ENCODE measurements at regions of chr17 and their contacts with region 1.

Region 1: GRCh38 chr17:48441231-48441711 is 11.3 kb upstream of the SKAP1 start:
- DNase-seq: peak; percentile 61
- H3K4me3 Mint-ChIP-seq: peak overlapping the region; percentile 54
- H3K27ac Mint-ChIP-seq: peak overlapping the region; percentile 97
- H3K4me1 Mint-ChIP-seq: peaks cover 93% of the 10 kb centered on the region
- H3K27me3 Mint-ChIP-seq: no peaks in the 10 kb centered on the region

Region 2: GRCh38 chr17:48335858-48336500 is 105.3 kb before region 1 on chr17:
- CTCF ChIA-PET with region 1: no interaction called
- POLR2A ChIA-PET with region 1: no interaction called
- DNase-seq: no peak
- H3K4me3 Mint-ChIP-seq: no peak overlapping the region
- H3K27ac Mint-ChIP-seq: no peak overlapping the region
- H3K4me1 Mint-ChIP-seq: peaks cover 8% of the 10 kb centered on the region
- H3K27me3 Mint-ChIP-seq: no peaks in the 10 kb centered on the region

Region 3: DNA sequence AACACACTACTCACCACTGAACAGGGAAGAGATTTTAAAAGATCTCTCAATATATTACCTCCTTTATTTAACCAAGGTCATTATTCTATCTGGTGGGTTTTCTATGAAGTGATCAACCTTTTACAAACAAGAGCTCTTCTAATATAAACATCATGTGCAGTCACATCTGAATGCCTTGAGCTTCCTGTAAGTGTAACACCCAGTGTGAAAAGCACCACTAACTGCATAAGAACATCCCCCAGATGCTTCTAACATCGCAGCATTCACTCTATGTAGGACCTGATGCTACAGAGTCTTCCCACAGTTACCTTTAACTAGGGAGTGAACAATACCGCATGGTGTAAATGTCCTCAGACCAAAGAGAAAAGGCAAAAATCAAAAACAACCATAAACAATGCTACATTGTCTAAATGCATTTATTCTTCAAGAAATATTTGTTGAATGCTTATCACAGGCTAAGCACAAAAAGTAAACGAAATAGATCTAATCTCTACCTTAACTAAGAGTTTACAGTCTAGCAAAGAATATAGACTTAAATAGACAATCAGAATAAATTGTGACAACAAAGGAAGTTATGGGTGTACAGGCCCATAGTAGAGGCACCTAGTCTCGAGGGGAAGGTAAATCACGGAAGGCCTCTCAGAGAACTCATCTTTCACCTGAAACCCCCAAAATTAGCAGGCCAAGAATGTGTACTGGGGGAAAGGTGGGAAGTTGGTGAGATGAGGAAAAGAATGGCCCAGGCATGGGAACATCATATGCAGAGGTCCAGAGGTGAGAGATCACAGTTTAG is 27.5 kb before region 1 on chr17:
- CTCF ChIA-PET with region 1: interaction called, 6 read pairs
- POLR2A ChIA-PET with region 1: interaction called, 17 read pairs
- DNase-seq: no peak
- H3K4me3 Mint-ChIP-seq: no peak overlapping the region
- H3K27ac Mint-ChIP-seq: peak overlapping the region; percentile 64
- H3K4me1 Mint-ChIP-seq: peaks cover 69% of the 10 kb centered on the region
- H3K27me3 Mint-ChIP-seq: no peaks in the 10 kb centered on the region

Measured in activated CD4-positive, alpha-beta memory T cell treated with anti-CD3 and anti-CD28 coated beads, Interleukin-2, amount 10 ng/mL, durations not matched to agents 7 days and 5 days (primary cell).